Esophagus muscularis mucosa (tissue), 4 donors: ENCODE measurements at regions of chr9 and their contacts with region 1.

Region 1: DNA sequence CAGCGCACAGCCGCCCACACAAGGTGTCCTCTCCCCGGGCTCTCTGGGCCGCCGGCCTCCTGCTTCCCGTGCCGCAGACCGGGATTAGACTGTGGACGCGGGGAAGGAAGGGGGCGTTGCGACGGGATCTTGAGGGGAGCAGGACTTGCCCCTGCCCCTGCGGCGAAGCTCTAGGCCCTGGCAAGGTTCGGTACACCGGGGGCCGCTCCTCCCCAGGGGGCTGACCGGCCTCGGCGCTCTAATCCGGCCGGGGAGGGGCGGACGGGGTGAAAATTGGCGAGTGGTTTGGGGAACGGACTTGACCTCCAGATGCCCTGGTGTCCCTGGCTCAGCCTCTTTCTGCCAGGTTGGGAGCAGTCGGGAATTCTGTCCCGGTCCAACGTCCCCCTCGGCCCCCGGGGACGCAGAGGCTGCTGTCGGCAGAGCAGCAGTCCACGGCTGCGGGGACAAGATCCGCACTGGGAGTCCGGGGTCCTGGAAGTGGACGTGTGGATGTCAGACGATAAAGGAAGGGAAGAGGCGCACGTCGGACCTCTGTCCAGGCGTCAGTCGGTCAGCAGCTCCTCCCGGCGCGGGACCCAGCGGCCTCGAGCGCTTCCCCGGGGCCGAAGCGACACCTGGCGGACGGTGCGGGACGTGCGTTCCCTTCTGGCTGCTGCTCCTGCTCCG is 1.9 kb upstream of the CNTFR start:
- DNase-seq: peak; percentile 95
- H3K4me3 ChIP-seq: peak overlapping the region; percentile 62 to 72 (median 64)
- H3K27ac ChIP-seq: peak overlapping the region in 2 of 4 donors; percentile 10 to 45
- H3K4me1 ChIP-seq: peaks cover 39 to 63% (median 60%) of the 10 kb centered on the region in 4 donors
- H3K27me3 ChIP-seq: peaks cover 4 to 78% (median 26%) of the 10 kb centered on the region in 4 donors
- CTCF ChIP-seq: peak; percentile 86 to 96 (median 87)
- EP300 ChIP-seq: no peak
- POLR2A ChIP-seq: no peak

Region 2: GRCh38 chr9:34403554-34404380 is 187.6 kb before region 1 on chr9:
- intact Hi-C with region 1: loop called (anchors 2 kb)
- DNase-seq: no peak
- H3K4me3 ChIP-seq: no peak overlapping the region
- H3K27ac ChIP-seq: no peak overlapping the region
- H3K4me1 ChIP-seq: peaks cover 0 to 8% (median 3%) of the 10 kb centered on the region in 4 donors
- H3K27me3 ChIP-seq: no peaks in the 10 kb centered on the region
- CTCF ChIP-seq: peak; percentile 92 to 97 (median 96)
- EP300 ChIP-seq: no peak
- POLR2A ChIP-seq: no peak

Region 3: DNA sequence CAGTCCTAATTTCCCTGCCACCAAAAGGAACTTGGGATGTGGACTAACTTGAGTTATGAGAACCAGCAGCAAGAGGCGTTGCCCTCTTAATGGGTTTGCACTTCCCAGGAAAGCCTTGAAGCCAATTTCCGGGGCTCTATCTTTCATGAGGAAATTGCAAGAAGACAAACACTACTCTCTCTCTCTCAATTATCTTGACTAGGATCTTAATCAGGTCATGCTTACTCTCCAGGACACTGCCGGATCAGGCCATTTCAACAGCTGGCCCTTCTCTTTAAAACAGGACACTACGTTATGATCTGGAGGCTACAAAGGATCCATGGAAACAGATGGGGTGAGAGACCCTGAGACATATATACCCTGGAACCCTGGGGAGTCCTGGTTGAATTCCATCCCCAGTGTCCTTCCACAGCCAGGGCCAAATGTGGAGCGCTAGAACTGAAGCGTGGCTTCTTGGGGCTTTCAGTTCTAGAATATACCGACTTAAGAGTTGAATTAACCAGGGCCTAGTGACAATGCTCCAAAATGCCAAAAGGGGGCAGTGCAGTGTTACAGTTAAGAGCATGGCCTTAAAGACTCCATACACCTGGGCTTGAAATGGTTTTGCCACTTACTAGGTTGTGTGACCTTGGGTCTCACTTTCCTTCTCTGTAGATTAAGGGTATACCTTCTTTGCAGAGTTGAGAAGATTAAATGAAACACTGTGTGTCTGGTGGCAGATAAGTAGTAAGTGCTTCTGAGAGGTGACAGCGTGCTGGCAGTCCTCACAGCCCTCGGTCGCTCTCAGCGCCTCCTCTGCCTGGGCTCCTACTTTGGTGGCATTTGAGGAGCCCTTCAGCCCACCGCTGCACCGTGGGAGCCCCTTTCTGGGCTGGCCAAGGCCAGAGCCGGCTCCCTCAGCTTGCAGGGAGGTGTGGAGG is 154.1 kb before region 1 on chr9:
- intact Hi-C with region 1: loop called (anchors 10 kb)
- DNase-seq: no peak
- H3K4me3 ChIP-seq: no peak overlapping the region
- H3K27ac ChIP-seq: no peak overlapping the region
- H3K4me1 ChIP-seq: peaks cover 13 to 17% (median 16%) of the 10 kb centered on the region in 4 donors
- H3K27me3 ChIP-seq: no peaks in the 10 kb centered on the region
- CTCF ChIP-seq: peak; percentile 57 to 77 (median 69)
- EP300 ChIP-seq: no peak
- POLR2A ChIP-seq: no peak

Region 4: GRCh38 chr9:34463098-34463900 is 128.1 kb before region 1 on chr9:
- intact Hi-C with region 1: no loop called
- DNase-seq: no peak
- H3K4me3 ChIP-seq: no peak overlapping the region
- H3K27ac ChIP-seq: no peak overlapping the region
- H3K4me1 ChIP-seq: peaks cover 0 to 13% (median 8%) of the 10 kb centered on the region in 4 donors
- H3K27me3 ChIP-seq: no peaks in the 10 kb centered on the region
- CTCF ChIP-seq: no peak
- EP300 ChIP-seq: no peak
- POLR2A ChIP-seq: no peak

Region 5: GRCh38 chr9:34546834-34547827 is 44.3 kb before region 1 on chr9:
- intact Hi-C with region 1: loop called (anchors 1 kb)
- DNase-seq: no peak
- H3K4me3 ChIP-seq: no peak overlapping the region
- H3K27ac ChIP-seq: no peak overlapping the region
- H3K4me1 ChIP-seq: peaks cover 0 to 17% (median 4%) of the 10 kb centered on the region in 4 donors
- H3K27me3 ChIP-seq: peaks cover 0 to 30% (median 0%) of the 10 kb centered on the region in 4 donors
- CTCF ChIP-seq: peak; percentile 53 to 70 (median 65)
- EP300 ChIP-seq: no peak
- POLR2A ChIP-seq: no peak

Region 6: GRCh38 chr9:34651876-34652601 is 60.7 kb after region 1 on chr9 and contains the start of gene IL11RA:
- intact Hi-C with region 1: loop called (anchors 10 kb)
- DNase-seq: peak; percentile 96
- H3K4me3 ChIP-seq: peak within 1 kb of the TSS; percentile 51 to 62 (median 58)
- H3K27ac ChIP-seq: peak within 1 kb of the TSS; percentile 80 to 83 (median 82)
- H3K4me1 ChIP-seq: peaks cover 59 to 77% (median 70%) of the 10 kb centered on the region in 4 donors
- H3K27me3 ChIP-seq: no peaks in the 10 kb centered on the region
- CTCF ChIP-seq: no peak
- EP300 ChIP-seq: no peak
- POLR2A ChIP-seq: no peak
- total RNA-seq, gene IL11RA: 33.0 to 40.2 (median 33.9) TPM